ENCODE measurements at regions of chr11 and their contacts with region 1.

Region 1: DNA sequence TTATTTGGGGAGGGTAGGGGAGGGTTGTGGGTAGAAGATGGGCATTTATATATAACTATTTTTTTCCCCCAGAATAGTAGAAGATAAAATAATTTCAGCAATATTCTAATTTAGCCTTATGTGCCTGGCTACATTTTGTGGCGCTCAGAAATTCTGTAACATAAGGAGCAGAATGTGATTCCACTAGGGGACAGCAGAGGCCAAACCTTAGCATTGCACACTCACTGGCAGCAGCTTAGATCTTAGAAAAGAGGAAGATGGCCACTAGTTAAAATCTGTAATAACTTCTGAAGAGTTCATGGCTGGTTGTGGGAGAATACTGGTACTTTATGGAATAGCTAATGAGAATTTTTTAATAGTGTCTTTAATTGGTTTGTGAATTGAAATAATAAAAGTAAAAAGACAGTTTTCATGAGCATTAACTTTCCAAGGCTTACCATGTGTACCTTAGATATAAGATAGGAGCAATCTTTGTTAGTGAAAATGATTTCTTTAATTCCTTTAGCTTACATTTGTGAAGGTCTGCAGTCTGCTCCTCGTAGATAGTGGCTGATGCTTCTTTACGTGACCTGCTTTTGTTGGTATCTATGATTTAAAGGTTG is 33.1 kb downstream of the DDX10 start:
- DNase-seq: peak in 6 of 10 donors; percentile 24 to 90 (median 54)

Region 2: DNA sequence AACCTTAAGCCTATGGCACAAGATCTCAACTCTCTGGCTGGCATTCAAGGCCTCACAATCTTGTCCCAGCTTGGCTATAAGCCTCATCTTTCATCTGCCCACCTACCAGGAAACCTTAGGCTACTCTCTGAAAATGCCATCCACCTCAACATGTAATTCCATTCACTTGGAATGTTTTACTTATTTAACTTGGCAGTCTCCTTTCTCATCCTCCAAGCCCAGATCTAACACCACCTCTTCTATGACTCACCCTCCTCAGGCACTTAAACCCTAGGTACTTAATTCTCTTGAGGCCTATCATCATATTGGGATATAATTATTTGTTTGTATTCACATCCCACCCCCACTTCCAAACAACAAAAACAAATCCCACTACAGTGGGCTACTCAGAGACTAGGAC is 214.8 kb before region 1 on chr11:
- intact Hi-C with region 1: no loop called
- DNase-seq: no peak

Region 3: GRCh38 chr11:109697140-109697843 is 999.3 kb after region 1 on chr11:
- intact Hi-C with region 1: loop called (anchors 5 kb)
- DNase-seq: peak in 2 of 10 donors; percentile 27 to 61

Region 4: GRCh38 chr11:109939166-109939810 is 1241.3 kb after region 1 on chr11:
- intact Hi-C with region 1: loop called (anchors 5 kb)
- DNase-seq: peak in 1 of 10 donors; percentile 8

Measured in posterior cingulate gyrus (tissue), 11 donors.